ENCODE measurements at regions of chr11 and their contacts with region 1.

Region 1: DNA sequence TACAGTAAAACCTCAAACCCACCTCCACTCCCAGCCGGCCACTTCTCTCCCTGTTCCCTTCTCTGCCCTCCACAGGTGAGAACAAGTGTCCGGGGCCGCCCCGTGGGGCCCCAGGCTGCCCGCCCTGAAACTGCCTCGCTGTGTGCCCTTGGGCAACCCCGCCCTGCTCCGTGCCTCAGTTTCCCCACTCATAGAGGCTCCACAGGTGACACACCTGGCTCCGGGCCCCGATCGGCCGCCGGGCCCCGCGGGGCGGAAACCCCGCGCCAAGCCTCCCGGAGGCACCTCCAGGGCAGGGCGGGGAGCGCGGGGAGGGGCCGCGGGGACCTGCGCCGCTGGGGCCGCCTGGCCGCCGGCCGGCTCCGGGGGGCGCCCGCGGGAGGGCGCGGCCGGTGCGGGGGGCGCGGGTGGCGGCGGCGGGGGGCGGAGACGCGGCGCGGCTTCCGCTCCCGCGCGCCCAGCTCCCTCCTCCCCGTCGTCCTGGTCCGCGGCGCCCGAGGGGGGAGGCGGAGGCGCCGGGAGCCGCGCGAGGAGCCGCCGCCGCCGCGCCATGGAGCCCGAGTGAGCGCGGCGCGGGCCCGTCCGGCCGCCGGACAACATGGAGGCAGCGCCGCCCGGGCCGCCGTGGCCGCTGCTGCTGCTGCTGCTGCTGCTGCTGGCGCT is at the start of gene LRP5:
- DNase-seq: no peak
- ATAC-seq: peak; percentile 40 to 42
- H3K4me3 ChIP-seq: peak within 1 kb of the TSS; percentile 63 to 89 (median 70)
- H3K27ac ChIP-seq: peak within 1 kb of the TSS; percentile 59 to 85 (median 78)
- H3K4me1 ChIP-seq: peaks cover 28 to 49% of the 10 kb centered on the region in 2 donors
- H3K27me3 ChIP-seq: no peaks in the 10 kb centered on the region
- CTCF ChIP-seq: no peak
- POLR2A ChIP-seq: peak in 1 of 2 donors; percentile 12
- total RNA-seq, gene LRP5: 3.7 to 12.3 (median 8.1) TPM

Region 2: DNA sequence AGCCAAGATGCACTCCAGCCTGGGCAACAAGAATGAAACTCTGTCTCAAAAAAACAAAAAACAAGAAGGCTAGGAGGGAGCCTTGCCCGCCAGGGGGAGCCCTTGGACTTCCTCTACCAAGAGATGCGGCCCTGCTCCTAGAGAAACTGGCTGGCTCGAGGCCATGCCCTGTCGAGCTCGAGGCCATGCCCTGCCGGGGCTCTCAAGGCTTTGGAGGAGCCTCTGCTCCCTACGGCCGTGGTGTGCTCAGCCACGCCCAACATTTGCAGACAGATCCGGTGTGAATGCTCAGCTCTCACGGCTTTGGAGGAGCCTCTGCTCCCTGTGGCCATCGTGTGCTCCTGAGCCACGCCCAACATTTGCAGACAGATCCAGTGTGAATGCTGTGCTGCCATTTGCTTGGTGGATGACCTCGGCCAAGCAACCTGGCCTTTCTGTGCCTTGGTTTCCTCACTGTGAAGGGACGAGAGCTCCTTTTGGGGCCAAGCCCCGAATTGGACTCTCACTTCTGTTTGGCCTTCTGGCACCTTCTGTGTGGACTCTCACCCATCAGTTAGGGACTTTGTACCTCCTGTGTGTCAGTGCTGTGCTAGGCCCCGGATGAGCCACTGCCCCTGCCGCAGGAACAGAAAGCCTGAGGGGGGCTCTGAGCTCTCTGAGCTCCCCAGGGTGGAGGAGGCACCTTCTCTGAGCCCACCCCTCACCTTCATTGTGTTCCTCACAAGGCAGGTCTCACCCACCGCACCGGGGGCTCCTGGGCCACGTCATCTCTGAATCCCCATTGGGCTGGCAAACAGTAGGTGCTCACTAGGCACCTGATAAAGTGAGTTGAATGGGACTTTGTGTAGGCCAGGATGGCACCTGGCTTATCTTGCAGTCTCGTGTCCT is 54.5 kb before region 1 on chr11:
- in situ Hi-C with region 1: no loop called
- intact Hi-C with region 1: no loop called
- DNase-seq: peak; percentile 88 to 93
- ATAC-seq: peak; percentile 82 to 86
- H3K4me3 ChIP-seq: peak overlapping the region in 3 of 4 donors; percentile 8 to 41 (median 15)
- H3K27ac ChIP-seq: no peak overlapping the region
- H3K4me1 ChIP-seq: peaks cover 4 to 9% of the 10 kb centered on the region in 2 donors
- H3K27me3 ChIP-seq: no peaks in the 10 kb centered on the region
- CTCF ChIP-seq: peak; percentile 84 to 93 (median 91)
- POLR2A ChIP-seq: no peak

Region 3: GRCh38 chr11:68447015-68447801 is 135.0 kb after region 1 on chr11:
- in situ Hi-C with region 1: loop called in 1 of 4 experiments (anchors 25 kb)
- intact Hi-C with region 1: no loop called
- DNase-seq: peak; percentile 51 to 62
- ATAC-seq: peak; percentile 86 to 87
- H3K4me3 ChIP-seq: no peak overlapping the region
- H3K27ac ChIP-seq: no peak overlapping the region
- H3K4me1 ChIP-seq: no peaks in the 10 kb centered on the region
- H3K27me3 ChIP-seq: no peaks in the 10 kb centered on the region
- CTCF ChIP-seq: peak; percentile 80 to 96 (median 95)
- POLR2A ChIP-seq: no peak